ENCODE measurements at regions of chr3 and their contacts with region 1.

Region 1: GRCh38 chr3:171566803-171567422 is 106.7 kb upstream of the TNIK start:
- DNase-seq: peak; percentile 60
- H3K4me3 ChIP-seq: no peak overlapping the region
- H3K27ac ChIP-seq: no peak overlapping the region
- H3K4me1 ChIP-seq: no peaks in the 10 kb centered on the region
- CTCF ChIP-seq: peak; percentile 91

Region 2: GRCh38 chr3:170961616-170962400 is 605.1 kb before region 1 on chr3:
- CTCF ChIA-PET with region 1: no interaction called
- POLR2A ChIA-PET with region 1: no interaction called
- intact Hi-C with region 1: loop called (anchors 2 kb)
- DNase-seq: peak; percentile 24
- H3K4me3 ChIP-seq: no peak overlapping the region
- H3K27ac ChIP-seq: no peak overlapping the region
- H3K4me1 ChIP-seq: no peaks in the 10 kb centered on the region
- CTCF ChIP-seq: peak; percentile 81

Region 3: DNA sequence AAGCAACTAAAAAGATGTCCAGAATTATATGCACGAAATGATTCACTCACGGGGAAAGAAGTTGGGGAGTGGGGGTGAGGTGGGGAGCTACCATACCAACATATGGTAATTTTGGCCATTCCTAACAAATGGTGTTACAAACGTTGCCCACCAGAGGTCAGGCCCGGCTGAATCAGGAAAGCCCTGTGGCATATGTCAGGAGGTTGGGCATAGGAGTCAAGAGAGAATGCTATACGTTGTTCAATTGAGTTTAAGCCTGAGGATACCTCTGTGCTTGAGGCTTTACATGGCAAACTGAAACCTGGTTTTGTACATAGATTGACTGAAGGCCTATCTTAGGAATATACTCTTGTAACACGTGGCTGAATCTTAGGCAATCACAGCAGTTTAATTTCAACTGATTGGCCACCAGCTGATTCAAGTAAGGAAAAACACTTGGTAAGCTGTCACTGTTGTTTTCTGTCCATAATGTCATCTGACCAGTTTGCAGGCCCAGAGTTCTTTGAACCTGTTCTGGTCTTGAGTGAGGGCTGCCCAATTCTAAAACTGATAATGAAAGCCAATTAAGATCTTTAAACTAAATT is 517.0 kb before region 1 on chr3:
- CTCF ChIA-PET with region 1: no interaction called
- POLR2A ChIA-PET with region 1: no interaction called
- intact Hi-C with region 1: loop called (anchors 1 kb)
- DNase-seq: peak; percentile 56
- H3K4me3 ChIP-seq: no peak overlapping the region
- H3K27ac ChIP-seq: no peak overlapping the region
- H3K4me1 ChIP-seq: no peaks in the 10 kb centered on the region
- CTCF ChIP-seq: peak; percentile 70

Region 4: DNA sequence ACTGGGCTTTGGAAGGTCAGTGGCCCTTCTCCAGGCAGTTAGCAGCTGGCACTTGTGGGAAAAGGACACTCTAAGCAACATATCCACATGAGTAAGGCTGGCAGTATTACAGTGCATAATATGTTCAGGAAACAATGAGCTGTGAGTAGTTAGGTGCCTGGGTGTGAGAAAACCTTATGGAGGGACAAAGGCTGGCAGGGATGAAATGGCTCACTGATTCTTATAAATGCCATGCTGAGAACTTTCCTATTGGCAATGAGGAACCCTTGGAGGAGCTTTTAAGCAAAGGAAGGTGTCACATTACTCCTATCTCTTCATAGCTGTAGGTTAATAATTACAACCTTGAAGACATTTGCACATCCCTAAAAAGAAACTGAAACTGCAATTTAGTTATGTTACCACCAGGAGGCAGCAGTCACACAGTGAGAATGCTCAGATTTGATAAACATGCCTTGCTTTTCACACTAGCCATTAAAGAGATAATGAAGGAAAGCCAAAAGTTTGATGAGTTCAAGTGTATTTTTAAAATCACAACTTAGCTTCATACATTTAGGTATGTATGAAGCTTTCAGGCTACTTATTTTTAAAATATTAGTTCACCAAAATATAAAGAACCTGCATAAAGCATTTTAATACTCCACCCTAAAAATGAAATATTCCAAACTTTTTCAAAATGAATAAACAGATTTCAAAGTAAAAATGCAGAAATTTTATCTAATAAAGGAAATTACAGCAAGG is 403.8 kb before region 1 on chr3:
- CTCF ChIA-PET with region 1: interaction called, 3 read pairs
- POLR2A ChIA-PET with region 1: no interaction called
- intact Hi-C with region 1: loop called (anchors 1 kb)
- DNase-seq: peak; percentile 35
- H3K4me3 ChIP-seq: no peak overlapping the region
- H3K27ac ChIP-seq: no peak overlapping the region
- H3K4me1 ChIP-seq: no peaks in the 10 kb centered on the region
- CTCF ChIP-seq: peak; percentile 84

Region 5: GRCh38 chr3:171187706-171188290 is 379.1 kb before region 1 on chr3:
- CTCF ChIA-PET with region 1: no interaction called
- POLR2A ChIA-PET with region 1: no interaction called
- intact Hi-C with region 1: loop called (anchors 2 kb)
- DNase-seq: peak; percentile 61
- H3K4me3 ChIP-seq: no peak overlapping the region
- H3K27ac ChIP-seq: no peak overlapping the region
- H3K4me1 ChIP-seq: no peaks in the 10 kb centered on the region
- CTCF ChIP-seq: peak; percentile 82

Region 6: DNA sequence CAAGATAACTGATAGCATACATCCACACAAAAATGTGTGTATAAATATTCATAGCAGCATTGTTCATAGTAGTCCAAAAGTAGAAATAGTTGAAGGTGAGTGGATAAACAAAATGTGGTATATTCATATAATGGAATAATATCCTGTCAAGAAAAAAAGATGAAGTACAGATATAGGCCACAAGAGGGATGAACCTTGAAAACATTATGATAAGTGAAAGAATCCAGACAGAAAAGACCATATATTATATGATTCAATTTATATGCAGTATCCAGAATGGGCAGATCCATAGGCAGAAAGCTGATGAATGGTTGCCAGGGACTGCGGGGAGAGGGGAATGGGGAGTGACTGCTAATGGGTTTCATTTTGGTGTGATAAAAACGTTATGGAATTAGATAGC is 52.4 kb before region 1 on chr3:
- CTCF ChIA-PET with region 1: no interaction called
- POLR2A ChIA-PET with region 1: no interaction called
- intact Hi-C with region 1: no loop called
- DNase-seq: no peak
- H3K4me3 ChIP-seq: no peak overlapping the region
- H3K27ac ChIP-seq: no peak overlapping the region
- H3K4me1 ChIP-seq: no peaks in the 10 kb centered on the region
- CTCF ChIP-seq: 0 out of 2 replicates have a peak, but pooled peaks have one; percentile 17